Activated B cell treated with CpG ODN at 0.5 μM for 24 hours (primary cell): ENCODE measurements at regions of chr7 and their contacts with region 1.

Region 1: GRCh38 chr7:16420649-16421332 is 547 bp downstream of the CRPPA start:
- DNase-seq: peak; percentile 73
- ATAC-seq: peak; percentile 90
- H3K4me3 Mint-ChIP-seq: peak overlapping the region; percentile 93
- H3K27ac Mint-ChIP-seq: peak overlapping the region; percentile 95
- H3K4me1 Mint-ChIP-seq: peaks cover 22% of the 10 kb centered on the region
- H3K27me3 Mint-ChIP-seq: no peaks in the 10 kb centered on the region
- CTCF ChIP-seq: no peak

Region 2: GRCh38 chr7:17940302-17940883 is 1519.6 kb after region 1 on chr7 and contains the start of gene SNX13:
- CTCF ChIA-PET with region 1: no interaction called
- POLR2A ChIA-PET with region 1: no interaction called
- intact Hi-C with region 1: loop called (anchors 1 kb)
- DNase-seq: peak; percentile 84
- ATAC-seq: peak; percentile 91
- H3K4me3 Mint-ChIP-seq: peak within 1 kb of the TSS; percentile 98
- H3K27ac Mint-ChIP-seq: peak within 1 kb of the TSS; percentile 98
- H3K4me1 Mint-ChIP-seq: peaks cover 44% of the 10 kb centered on the region
- H3K27me3 Mint-ChIP-seq: no peaks in the 10 kb centered on the region
- CTCF ChIP-seq: no peak
- total RNA-seq, gene SNX13: 40.0 and 46.5 TPM in 2 replicates